HEK293 (cell line): ENCODE measurements at regions of chr12 and their contacts with region 1.

Region 1: GRCh38 chr12:53213348-53213747 is 6.3 kb upstream of the ITGB7 start:
- H3K4me3 ChIP-seq: no peak overlapping the region
- H3K27ac ChIP-seq: no peak overlapping the region
- H3K4me1 ChIP-seq: no peaks in the 10 kb centered on the region
- CTCF ChIP-seq: peak; percentile 91

Region 2: GRCh38 chr12:52992699-52993557 is 220.4 kb before region 1 on chr12:
- CTCF ChIA-PET with region 1: no interaction called
- POLR2A ChIA-PET with region 1: no interaction called
- H3K4me3 ChIP-seq: no peak overlapping the region
- H3K27ac ChIP-seq: no peak overlapping the region
- H3K4me1 ChIP-seq: no peaks in the 10 kb centered on the region; the same call in 1 of the 2 replicates
- CTCF ChIP-seq: no peak

Region 3: GRCh38 chr12:53159195-53159839 is 54.0 kb before region 1 on chr12:
- CTCF ChIA-PET with region 1: interaction called, 44 read pairs
- POLR2A ChIA-PET with region 1: interaction called, 3 read pairs
- H3K4me3 ChIP-seq: no peak overlapping the region
- H3K27ac ChIP-seq: no peak overlapping the region
- H3K4me1 ChIP-seq: no peaks in the 10 kb centered on the region
- CTCF ChIP-seq: peak; percentile 99

Region 4: DNA sequence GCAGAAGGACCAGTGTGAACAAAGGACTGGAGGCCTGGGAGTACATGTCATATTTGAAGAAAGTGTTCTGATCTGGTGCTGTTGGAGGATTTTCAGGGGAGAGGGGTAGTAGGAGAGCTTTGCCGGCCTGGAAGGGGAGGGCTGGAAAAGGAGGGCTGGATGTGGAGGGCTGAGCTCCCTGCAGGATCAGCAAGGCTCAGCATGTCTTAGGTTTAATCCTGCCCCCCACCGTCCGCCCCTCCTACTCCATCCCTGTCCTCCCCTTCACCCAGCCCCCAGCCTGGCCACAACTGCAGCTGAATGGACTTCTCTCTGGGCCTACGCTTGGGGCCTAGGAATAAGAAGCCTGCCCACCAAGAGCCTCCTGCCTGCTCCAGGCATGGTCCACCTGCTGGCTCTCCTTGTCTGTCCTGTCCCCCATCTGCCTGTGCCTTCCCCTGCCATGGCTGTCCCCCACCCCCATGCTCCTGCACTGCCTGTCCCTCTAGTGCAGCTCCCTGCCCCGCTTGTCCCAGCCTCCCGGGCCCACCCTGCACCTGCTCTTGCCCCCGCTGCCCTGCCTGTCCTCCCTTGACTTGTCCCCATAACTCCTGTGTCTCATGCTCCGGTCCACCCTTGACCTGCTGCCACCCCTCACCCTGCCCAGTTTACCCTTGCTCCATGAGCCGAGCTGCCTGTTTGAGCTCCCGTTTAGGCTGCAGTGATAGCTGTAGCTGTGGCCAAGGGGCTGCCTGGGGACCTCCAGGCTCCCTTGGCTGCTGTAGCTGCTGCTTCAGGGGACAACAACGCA is 28.5 kb after region 1 on chr12:
- CTCF ChIA-PET with region 1: interaction called, 14 read pairs
- POLR2A ChIA-PET with region 1: interaction called, 4 read pairs
- H3K4me3 ChIP-seq: no peak overlapping the region
- H3K27ac ChIP-seq: no peak overlapping the region
- H3K4me1 ChIP-seq: no peaks in the 10 kb centered on the region
- CTCF ChIP-seq: no peak

Region 5: DNA sequence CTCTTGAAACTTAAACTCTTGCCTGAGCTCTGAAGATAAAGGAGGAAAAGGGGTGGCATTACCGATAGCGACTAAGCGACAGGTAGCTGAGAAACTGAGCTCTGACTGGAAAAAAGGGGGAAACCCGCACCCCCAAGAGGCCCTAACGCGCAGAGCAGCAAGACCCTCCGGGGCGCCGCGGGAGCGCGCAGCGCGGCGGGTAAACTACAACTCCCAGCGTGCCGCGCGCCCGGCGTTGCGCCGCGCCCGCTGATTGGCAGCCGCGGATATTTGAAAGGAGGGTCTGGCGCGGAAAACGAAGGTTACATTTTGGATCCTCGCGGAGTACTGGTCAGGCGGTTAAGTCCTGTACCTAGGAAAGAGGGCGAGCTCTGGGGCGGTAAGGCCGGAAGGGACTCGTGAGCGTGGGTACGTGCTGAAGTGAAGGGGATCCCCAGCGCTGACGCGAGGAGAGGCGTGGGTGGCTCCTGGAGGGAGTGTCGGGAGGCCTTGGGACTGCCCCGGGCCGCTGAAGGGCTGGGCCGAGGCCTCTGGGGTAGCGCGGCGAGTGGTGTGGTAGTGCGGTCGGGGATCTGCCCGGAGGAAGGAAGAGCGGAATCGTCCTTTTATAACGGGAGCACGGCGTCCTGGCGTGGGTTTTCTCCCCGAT is 54.8 kb after region 1 on chr12 and contains the start of gene ESPL1:
- CTCF ChIA-PET with region 1: interaction called, 144 read pairs
- POLR2A ChIA-PET with region 1: interaction called, 10 read pairs
- H3K4me3 ChIP-seq: peak within 1 kb of the TSS; percentile 74
- H3K27ac ChIP-seq: peak within 1 kb of the TSS; percentile 75; the same call in 1 of the 2 replicates
- H3K4me1 ChIP-seq: peaks cover 5% of the 10 kb centered on the region; the same call in 1 of the 2 replicates
- CTCF ChIP-seq: peak; percentile 73

Region 6: DNA sequence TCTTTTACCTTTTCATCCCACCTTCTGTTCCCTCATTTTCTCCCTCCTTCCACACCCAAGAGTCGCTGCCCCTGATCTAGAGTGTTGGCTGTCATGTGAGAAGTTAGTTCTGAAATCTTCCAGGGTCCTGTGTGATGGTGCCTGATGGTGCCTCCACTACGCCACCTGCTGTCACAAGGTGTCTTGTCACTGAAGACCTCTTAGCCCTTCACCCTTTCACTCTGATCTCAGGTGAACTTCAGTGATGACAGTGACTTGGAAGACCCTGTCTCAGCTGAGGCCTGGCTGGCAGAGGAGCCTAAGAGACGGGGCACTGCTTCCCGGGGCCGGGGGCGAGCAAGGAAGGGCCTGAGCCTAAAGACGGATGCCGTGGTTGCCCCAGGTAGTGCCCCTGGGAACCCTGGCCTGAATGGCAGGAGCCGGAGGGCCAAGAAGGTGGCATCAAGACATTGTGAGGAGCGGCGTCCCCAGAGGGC is 74.4 kb after region 1 on chr12:
- CTCF ChIA-PET with region 1: interaction called, 132 read pairs
- POLR2A ChIA-PET with region 1: interaction called, 11 read pairs
- H3K4me3 ChIP-seq: no peak overlapping the region
- H3K27ac ChIP-seq: no peak overlapping the region
- H3K4me1 ChIP-seq: no peaks in the 10 kb centered on the region
- CTCF ChIP-seq: peak; percentile 45; the same call in 1 of the 2 replicates

Region 7: DNA sequence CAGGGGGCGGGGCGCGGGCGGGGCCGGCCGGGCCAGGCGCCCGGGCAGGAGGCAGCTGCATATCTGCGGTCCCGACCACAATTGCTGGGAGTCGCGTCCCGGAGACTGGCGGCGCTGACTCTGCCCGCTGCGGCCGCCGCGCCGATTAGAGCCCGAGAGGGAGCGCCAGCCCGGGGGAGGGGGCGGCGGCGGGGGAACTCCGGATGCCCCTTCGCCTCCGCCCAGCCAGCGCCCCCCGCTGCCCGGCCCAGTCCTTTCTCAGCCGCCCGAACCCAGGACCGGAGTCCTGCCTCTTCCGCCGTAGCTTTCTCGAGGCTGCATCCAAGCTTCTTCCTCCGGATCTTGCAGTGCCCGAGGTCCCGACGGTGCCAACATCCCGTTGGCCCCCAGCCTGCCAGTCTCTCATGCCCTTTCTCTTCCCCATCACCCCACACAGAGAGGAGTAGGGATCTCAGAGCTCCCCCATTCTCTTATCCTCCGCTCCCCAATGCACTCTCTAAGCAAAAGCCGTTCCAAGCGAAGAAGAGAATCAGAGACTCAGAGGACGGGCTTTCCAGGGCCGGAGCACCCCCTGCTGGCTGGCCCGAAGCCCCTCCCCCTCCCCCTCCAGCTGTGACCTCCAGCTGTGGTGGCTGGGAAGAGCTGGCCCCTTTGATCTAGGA is 131.6 kb after region 1 on chr12:
- CTCF ChIA-PET with region 1: interaction called, 20 read pairs
- POLR2A ChIA-PET with region 1: no interaction called
- H3K4me3 ChIP-seq: peak overlapping the region; percentile 62
- H3K27ac ChIP-seq: peak overlapping the region; percentile 21; the same call in 1 of the 2 replicates
- H3K4me1 ChIP-seq: no peaks in the 10 kb centered on the region
- CTCF ChIP-seq: peak; percentile 93